MCF 10A (cell line): ENCODE measurements at regions of chr17 and their contacts with region 1.

Region 1: DNA sequence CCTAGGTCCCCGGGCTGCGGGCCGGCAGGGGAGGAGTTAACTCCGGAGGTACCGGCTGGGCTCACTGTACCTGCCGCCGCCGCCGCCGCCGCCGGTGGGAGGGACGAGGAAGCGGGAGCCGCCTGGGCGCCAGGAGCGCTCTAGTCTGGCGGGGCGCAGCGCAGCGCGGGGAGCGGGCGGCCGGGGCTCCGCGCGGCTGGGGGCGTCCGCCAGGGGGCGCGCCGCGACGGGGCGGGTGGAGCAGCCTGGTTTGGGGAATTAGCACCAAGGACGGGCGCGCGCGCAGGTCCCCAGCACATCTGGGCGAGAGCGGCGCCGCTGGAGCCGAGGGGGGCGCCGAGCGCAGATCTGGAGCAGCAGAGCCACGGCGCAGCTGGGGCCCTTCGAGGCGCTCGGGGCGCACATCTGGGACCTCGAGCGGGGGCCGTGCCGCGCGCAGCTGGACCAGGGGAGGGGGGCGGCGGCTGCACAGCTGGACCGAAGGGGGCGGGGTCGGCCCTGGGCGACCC is at the start of gene NXPH3:
- DNase-seq: peak; percentile 54
- H3K4me3 Mint-ChIP-seq: peak within 1 kb of the TSS; percentile 69
- H3K27ac Mint-ChIP-seq: no peak within 1 kb of the TSS
- H3K4me1 Mint-ChIP-seq: peaks cover 5% of the 10 kb centered on the region
- H3K27me3 Mint-ChIP-seq: peaks cover 33% of the 10 kb centered on the region
- CTCF ChIP-seq: peak; percentile 59
- total RNA-seq, gene NXPH3: not detected in 2 replicates

Region 2: GRCh38 chr17:49381063-49381462 is 194.6 kb before region 1 on chr17:
- CTCF ChIA-PET with region 1: no interaction called
- POLR2A ChIA-PET with region 1: no interaction called
- intact Hi-C with region 1: no loop called
- DNase-seq: no peak
- H3K4me3 Mint-ChIP-seq: no peak overlapping the region
- H3K27ac Mint-ChIP-seq: no peak overlapping the region
- H3K4me1 Mint-ChIP-seq: no peaks in the 10 kb centered on the region
- H3K27me3 Mint-ChIP-seq: no peaks in the 10 kb centered on the region
- CTCF ChIP-seq: no peak

Region 3: GRCh38 chr17:49677933-49678847 is 102.6 kb after region 1 on chr17 and contains the start of gene SPOP:
- CTCF ChIA-PET with region 1: interaction called, 3 read pairs
- POLR2A ChIA-PET with region 1: no interaction called
- intact Hi-C with region 1: loop called (anchors 5 kb)
- DNase-seq: peak; percentile 99
- H3K4me3 Mint-ChIP-seq: peak within 1 kb of the TSS; percentile 77
- H3K27ac Mint-ChIP-seq: peak within 1 kb of the TSS; percentile 57
- H3K4me1 Mint-ChIP-seq: peaks cover 10% of the 10 kb centered on the region
- H3K27me3 Mint-ChIP-seq: no peaks in the 10 kb centered on the region
- CTCF ChIP-seq: no peak
- total RNA-seq, gene SPOP: 42.1 and 52.3 TPM in 2 replicates

Region 4: GRCh38 chr17:49694847-49695683 is 119.4 kb after region 1 on chr17:
- CTCF ChIA-PET with region 1: interaction called, 325 read pairs
- POLR2A ChIA-PET with region 1: no interaction called
- intact Hi-C with region 1: loop called (anchors 1 kb)
- DNase-seq: peak; percentile 30
- H3K4me3 Mint-ChIP-seq: no peak overlapping the region
- H3K27ac Mint-ChIP-seq: no peak overlapping the region
- H3K4me1 Mint-ChIP-seq: no peaks in the 10 kb centered on the region
- H3K27me3 Mint-ChIP-seq: no peaks in the 10 kb centered on the region
- CTCF ChIP-seq: peak; percentile 92